Dendritic cell treated with granulocyte-macrophage colony-stimulating factor and Interleukin-4, amounts not matched to agents 40 ng/mL and 50 ng/mL, for 4 days (primary cell): ENCODE measurements at regions of chr7 and their contacts with region 1.

Region 1: DNA sequence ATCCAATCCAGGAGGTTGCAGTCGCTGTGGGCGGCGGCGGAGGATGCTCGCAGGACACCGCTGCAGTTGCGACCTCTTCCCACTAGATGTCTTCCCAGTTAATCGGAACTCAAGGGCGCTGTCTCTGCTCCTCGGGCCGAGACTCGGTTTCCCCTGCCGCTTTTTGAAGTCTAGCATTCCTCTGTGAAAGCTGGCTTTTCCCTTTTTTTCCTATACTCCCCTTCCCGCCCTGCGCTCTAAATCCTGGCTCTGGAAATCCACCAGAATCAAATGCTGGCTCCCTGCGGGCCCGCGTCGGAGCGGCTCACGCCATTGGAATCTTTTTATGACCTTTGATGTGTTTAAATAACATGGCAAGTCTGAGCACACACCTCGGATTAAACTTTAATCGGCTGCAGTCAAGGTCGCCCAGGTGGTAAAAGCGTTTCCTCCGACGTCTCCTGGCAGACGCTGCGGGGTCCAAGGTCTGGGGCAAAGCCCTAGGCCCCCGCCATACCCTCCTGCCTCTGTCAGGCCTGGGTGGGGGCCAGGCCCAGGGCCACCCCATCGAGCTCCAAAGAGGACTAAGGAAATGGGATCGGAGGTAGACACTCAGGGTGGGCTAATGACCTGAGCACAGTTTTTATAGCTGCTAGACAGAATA is 10.7 kb upstream of the HOXA13 start:
- H3K4me3 Mint-ChIP-seq: peak overlapping the region; percentile 67
- H3K27ac Mint-ChIP-seq: no peak overlapping the region
- H3K4me1 Mint-ChIP-seq: peaks cover 28% of the 10 kb centered on the region
- H3K27me3 Mint-ChIP-seq: peaks cover 100% of the 10 kb centered on the region

Region 2: GRCh38 chr7:27130540-27131389 is 79.8 kb before region 1 on chr7 and contains the start of gene HOXA4:
- intact Hi-C with region 1: no loop called
- H3K4me3 Mint-ChIP-seq: peak within 1 kb of the TSS; percentile 80
- H3K27ac Mint-ChIP-seq: peak within 1 kb of the TSS; percentile 91
- H3K4me1 Mint-ChIP-seq: peaks cover 16% of the 10 kb centered on the region
- H3K27me3 Mint-ChIP-seq: peaks cover 38% of the 10 kb centered on the region

Region 3: GRCh38 chr7:27165089-27165995 is 45.2 kb before region 1 on chr7 and contains the start of gene HOXA9:
- intact Hi-C with region 1: no loop called
- H3K4me3 Mint-ChIP-seq: peak within 1 kb of the TSS; percentile 71
- H3K27ac Mint-ChIP-seq: peak within 1 kb of the TSS; percentile 15
- H3K4me1 Mint-ChIP-seq: peaks cover 71% of the 10 kb centered on the region
- H3K27me3 Mint-ChIP-seq: peaks cover 86% of the 10 kb centered on the region

Region 4: GRCh38 chr7:27192546-27193337 is 17.8 kb before region 1 on chr7:
- intact Hi-C with region 1: no loop called
- H3K4me3 Mint-ChIP-seq: peak overlapping the region; percentile 63
- H3K27ac Mint-ChIP-seq: no peak overlapping the region
- H3K4me1 Mint-ChIP-seq: peaks cover 40% of the 10 kb centered on the region
- H3K27me3 Mint-ChIP-seq: peaks cover 86% of the 10 kb centered on the region

Region 5: GRCh38 chr7:27245798-27246691 is 35.5 kb after region 1 on chr7:
- intact Hi-C with region 1: loop called (anchors 5 kb)
- H3K4me3 Mint-ChIP-seq: peak overlapping the region; percentile 43
- H3K27ac Mint-ChIP-seq: no peak overlapping the region
- H3K4me1 Mint-ChIP-seq: peaks cover 52% of the 10 kb centered on the region
- H3K27me3 Mint-ChIP-seq: peaks cover 98% of the 10 kb centered on the region